GM10248 (cell line): ENCODE measurements at regions of chr9 and their contacts with region 1.

Region 1: DNA sequence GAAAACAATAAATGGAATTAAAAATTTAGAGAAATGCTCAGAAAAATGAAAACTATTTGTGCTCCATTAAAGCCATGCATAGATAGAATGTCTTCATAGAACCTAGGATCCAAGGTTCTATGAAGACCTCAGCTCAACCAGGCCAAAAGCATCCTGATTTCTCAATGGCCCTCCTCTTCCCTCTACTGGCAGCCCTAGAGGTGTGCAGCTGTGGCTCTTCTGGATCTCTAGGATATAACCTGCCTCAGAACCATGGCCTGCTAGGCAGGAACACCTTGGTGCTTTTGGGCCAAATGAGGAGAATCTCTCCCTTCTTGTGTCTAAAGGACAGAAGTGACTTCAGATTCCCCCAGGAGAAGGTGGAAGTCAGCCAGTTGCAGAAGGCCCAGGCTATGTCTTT is 15.1 kb downstream of the IFNA1 start:
- DNase-seq: peak; percentile 41
- CTCF ChIP-seq: peak; percentile 71

Region 2: GRCh38 chr9:21234153-21234687 is 221.1 kb before region 1 on chr9:
- CTCF ChIA-PET with region 1: interaction called, 11 read pairs
- POLR2A ChIA-PET with region 1: no interaction called
- DNase-seq: no peak
- CTCF ChIP-seq: no peak

Region 3: GRCh38 chr9:21326526-21327139 is 128.7 kb before region 1 on chr9:
- CTCF ChIA-PET with region 1: interaction called, 15 read pairs
- POLR2A ChIA-PET with region 1: no interaction called
- DNase-seq: peak; percentile 49
- CTCF ChIP-seq: peak; percentile 35

Region 4: GRCh38 chr9:21334701-21335632 is 120.4 kb before region 1 on chr9 and contains the start of gene KLHL9:
- CTCF ChIA-PET with region 1: interaction called, 10 read pairs
- POLR2A ChIA-PET with region 1: no interaction called
- DNase-seq: peak; percentile 93
- CTCF ChIP-seq: no peak

Region 5: GRCh38 chr9:21434202-21435014 is 20.9 kb before region 1 on chr9:
- CTCF ChIA-PET with region 1: interaction called, 15 read pairs
- POLR2A ChIA-PET with region 1: no interaction called
- DNase-seq: peak; percentile 25
- CTCF ChIP-seq: peak; percentile 56

Region 6: GRCh38 chr9:21465859-21466518 is 10.7 kb after region 1 on chr9:
- CTCF ChIA-PET with region 1: interaction called, 25 read pairs
- POLR2A ChIA-PET with region 1: no interaction called
- DNase-seq: peak; percentile 54
- CTCF ChIP-seq: peak; percentile 78

Region 7: GRCh38 chr9:21481470-21482056 is 26.2 kb after region 1 on chr9:
- CTCF ChIA-PET with region 1: no interaction called
- POLR2A ChIA-PET with region 1: no interaction called
- DNase-seq: peak; percentile 9
- CTCF ChIP-seq: no peak